Common myeloid progenitor, CD34-positive (primary cell): ENCODE measurements at regions of chr12 and their contacts with region 1.

Region 1: DNA sequence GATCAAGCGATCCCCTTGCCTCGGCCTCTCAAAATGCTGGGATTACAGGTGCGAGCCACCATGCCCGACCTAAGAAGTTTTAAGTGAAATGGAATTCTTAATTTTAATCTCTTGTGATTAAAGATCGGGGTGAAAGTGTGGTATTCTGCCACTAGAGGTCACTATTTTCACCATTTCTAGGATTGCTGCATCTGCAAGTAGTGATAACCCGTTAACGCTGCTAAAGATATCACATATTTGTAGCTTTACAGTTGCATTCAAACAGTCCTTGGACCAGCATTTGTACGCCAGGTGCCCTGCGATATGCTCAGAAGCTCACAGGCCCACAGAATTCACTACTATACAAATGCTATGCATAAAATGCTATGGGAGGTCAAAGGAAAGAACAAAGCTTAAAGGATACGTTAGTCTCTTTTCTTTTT is 19.3 kb downstream of the CCDC62 start:
- DNase-seq: peak; percentile 74 to 86 (median 84)
- H3K4me3 ChIP-seq: peak overlapping the region in 2 of 7 experiments; percentile 4 to 32
- H3K27ac ChIP-seq: no peak overlapping the region
- H3K4me1 ChIP-seq: peaks cover 0 to 2% (median 0%) of the 10 kb centered on the region in 4 experiments
- H3K27me3 ChIP-seq: no peaks in the 10 kb centered on the region

Region 2: DNA sequence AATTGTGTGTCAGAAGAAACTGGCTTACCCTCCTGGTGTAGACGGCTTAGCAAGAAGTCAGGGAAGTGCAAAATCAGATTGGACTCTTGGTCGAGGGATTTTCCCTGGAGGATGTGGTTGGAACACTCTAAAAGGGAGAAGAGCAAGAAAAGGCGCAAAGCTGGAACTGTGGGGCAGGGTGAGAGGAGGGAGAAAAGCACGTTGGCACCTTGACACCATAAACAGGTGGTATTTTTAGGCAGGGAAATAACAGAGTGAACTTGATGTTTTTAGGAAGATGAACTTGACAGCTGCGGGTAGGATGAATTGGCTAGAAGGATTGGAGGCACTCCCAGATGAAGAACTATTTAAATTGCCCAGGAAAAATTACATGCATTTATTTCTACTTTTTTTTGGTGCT is 158.2 kb before region 1 on chr12:
- CTCF ChIA-PET with region 1: interaction called, 14 read pairs
- POLR2A ChIA-PET with region 1: no interaction called
- DNase-seq: no peak
- H3K4me3 ChIP-seq: no peak overlapping the region
- H3K27ac ChIP-seq: no peak overlapping the region
- H3K4me1 ChIP-seq: no peaks in the 10 kb centered on the region
- H3K27me3 ChIP-seq: no peaks in the 10 kb centered on the region

Region 3: DNA sequence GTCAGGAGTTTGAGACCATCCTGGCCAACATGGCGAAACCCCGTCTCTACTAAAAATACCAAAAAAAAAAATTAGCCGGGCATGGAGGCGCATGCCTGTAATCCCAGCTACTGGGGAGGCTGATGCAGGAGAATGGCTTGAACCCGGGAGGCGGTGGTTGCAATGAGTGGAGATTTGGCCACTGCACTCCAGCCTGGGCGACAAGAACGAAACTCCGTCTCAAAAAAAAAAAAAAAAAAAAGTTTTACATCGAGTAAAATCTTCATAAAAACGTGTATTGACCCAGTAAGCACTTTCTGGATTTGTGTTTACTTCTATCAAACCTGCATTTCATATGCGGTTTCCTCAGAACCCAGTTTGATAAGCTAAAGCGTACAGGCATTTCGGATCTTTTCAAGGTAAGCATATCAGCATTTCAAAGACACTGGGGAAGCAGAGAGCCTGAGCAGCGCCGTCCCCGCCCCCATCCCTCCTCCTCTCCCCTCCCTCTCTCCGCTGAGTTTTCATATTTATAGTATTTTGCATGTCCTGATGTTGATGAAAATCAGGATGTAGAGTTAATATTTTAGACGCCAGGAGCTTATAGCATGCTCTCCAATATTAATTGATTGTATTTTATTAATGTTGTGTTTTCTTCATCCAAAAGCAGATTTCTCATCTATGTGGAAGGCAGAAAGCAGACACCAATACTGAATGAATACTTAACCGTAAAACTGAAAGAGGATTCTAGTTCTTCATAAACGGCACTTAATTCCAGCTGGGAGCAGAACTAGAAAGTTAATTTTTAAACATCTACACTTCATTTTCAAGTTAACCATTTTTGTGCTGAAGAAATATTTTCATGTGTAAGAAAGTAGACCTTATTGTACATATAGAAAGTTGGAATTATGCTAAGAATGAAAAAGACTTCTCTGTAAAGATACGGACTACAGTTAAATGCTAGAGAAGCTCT is 32.4 kb after region 1 on chr12:
- CTCF ChIA-PET with region 1: interaction called, 15 read pairs
- POLR2A ChIA-PET with region 1: no interaction called
- DNase-seq: peak in 2 of 3 donors; percentile 21 to 36
- H3K4me3 ChIP-seq: peak overlapping the region in 4 of 7 experiments; percentile 26 to 74 (median 35)
- H3K27ac ChIP-seq: no peak overlapping the region
- H3K4me1 ChIP-seq: peaks cover 0 to 2% (median 0%) of the 10 kb centered on the region in 4 experiments
- H3K27me3 ChIP-seq: no peaks in the 10 kb centered on the region

Region 4: DNA sequence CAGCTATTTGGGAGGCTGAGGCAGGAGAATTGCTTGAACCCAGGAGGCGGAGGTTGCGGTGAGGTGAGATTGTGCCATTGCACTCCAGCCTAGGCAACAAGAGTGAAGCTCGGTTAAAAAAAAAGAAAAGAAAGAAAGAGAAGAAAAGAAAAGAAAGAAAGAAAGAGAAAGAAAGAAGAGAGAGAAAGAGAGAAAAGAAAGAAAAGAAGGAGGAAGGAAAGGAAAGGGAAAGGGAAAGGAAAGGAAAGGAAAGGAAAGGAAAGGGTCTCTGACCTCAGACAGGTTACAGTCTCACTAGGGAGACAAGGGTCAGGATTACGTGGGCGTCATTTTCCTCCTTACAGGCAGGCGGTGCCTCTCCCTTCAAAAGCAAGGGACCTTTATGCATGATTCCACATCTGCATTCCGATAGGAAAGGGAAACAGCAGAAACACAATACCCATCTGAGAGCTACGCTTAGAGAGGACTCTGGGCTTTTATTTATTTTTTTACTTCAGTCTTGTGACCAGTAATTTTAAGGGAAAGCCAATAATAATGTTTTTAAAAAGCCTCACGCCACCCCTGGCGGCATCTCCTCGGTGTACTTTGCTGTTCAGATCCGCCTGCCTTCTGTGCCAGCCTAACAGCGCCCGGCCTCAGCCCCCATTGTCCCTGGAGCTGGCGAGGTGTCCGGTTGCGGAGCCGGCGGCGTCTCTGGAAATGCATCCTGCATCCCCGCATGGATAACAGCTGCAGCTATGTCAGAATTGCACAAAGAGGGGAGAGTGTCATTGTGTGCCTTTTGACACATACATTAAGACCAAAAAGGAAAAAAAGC is 40.6 kb after region 1 on chr12:
- CTCF ChIA-PET with region 1: interaction called, 17 read pairs
- POLR2A ChIA-PET with region 1: no interaction called
- DNase-seq: peak; percentile 31 to 73 (median 65)
- H3K4me3 ChIP-seq: peak overlapping the region in 6 of 7 experiments; percentile 56 to 93 (median 83)
- H3K27ac ChIP-seq: no peak overlapping the region
- H3K4me1 ChIP-seq: peaks cover 4 to 24% (median 11%) of the 10 kb centered on the region in 4 experiments
- H3K27me3 ChIP-seq: no peaks in the 10 kb centered on the region

Region 5: GRCh38 chr12:122951979-122952892 is 158.5 kb after region 1 on chr12:
- CTCF ChIA-PET with region 1: interaction called, 11 read pairs
- POLR2A ChIA-PET with region 1: no interaction called
- DNase-seq: peak; percentile 68 to 82 (median 74)
- H3K4me3 ChIP-seq: no peak overlapping the region
- H3K27ac ChIP-seq: no peak overlapping the region
- H3K4me1 ChIP-seq: peaks cover 0 to 10% (median 8%) of the 10 kb centered on the region in 4 experiments
- H3K27me3 ChIP-seq: no peaks in the 10 kb centered on the region